ENCODE measurements at regions of chr10 and their contacts with region 1.

Region 1: GRCh38 chr10:88114368-88114767 is 250.9 kb downstream of the PTEN start:
- DNase-seq: peak; percentile 34 to 60 (median 48)
- ATAC-seq: peak; percentile 47 to 90 (median 78)
- H3K4me3 ChIP-seq: no peak overlapping the region
- H3K27ac ChIP-seq: no peak overlapping the region
- H3K4me1 ChIP-seq: peaks cover 0 to 69% (median 3%) of the 10 kb centered on the region in 12 donors
- H3K27me3 ChIP-seq: no peaks in the 10 kb centered on the region
- CTCF ChIP-seq: peak; percentile 48 to 76 (median 66)
- POLR2A ChIP-seq: no peak

Region 2: GRCh38 chr10:87850742-87851205 is 263.6 kb before region 1 on chr10:
- intact Hi-C with region 1: loop called in 3 of 10 experiments (anchors 1 to 5 kb)
- DNase-seq: peak in 4 of 5 donors; percentile 55 to 77 (median 62)
- ATAC-seq: peak in 3 of 4 donors; percentile 93 to 96 (median 94)
- H3K4me3 ChIP-seq: no peak overlapping the region
- H3K27ac ChIP-seq: no peak overlapping the region
- H3K4me1 ChIP-seq: peaks cover 0 to 9% (median 0%) of the 10 kb centered on the region in 12 donors
- H3K27me3 ChIP-seq: no peaks in the 10 kb centered on the region
- CTCF ChIP-seq: peak; percentile 46 to 81 (median 72)
- POLR2A ChIP-seq: no peak

Region 3: GRCh38 chr10:87976101-87976743 is 138.1 kb before region 1 on chr10:
- intact Hi-C with region 1: loop called in 1 of 10 experiments (anchors 5 kb)
- DNase-seq: no peak
- ATAC-seq: no peak
- H3K4me3 ChIP-seq: no peak overlapping the region
- H3K27ac ChIP-seq: no peak overlapping the region
- H3K4me1 ChIP-seq: peaks cover 0 to 2% (median 0%) of the 10 kb centered on the region in 12 donors
- H3K27me3 ChIP-seq: no peaks in the 10 kb centered on the region
- CTCF ChIP-seq: no peak
- POLR2A ChIP-seq: no peak